Activated T-helper 2 cell treated with anti-CD3 and anti-CD28 coated beads, Interferon-gamma antibody, Interleukin-2, Interleukin-4, amounts not matched to agents 10 μg/mL and 5 μg/mL and 100 μg/mL, durations not matched to agents 14 hours and 24 hours and 36 hours (primary cell): ENCODE measurements at regions of chr7 and their contacts with region 1.

Region 1: GRCh38 chr7:7566651-7567611 is at the start of gene MIOS:
- DNase-seq: peak; percentile 76
- H3K4me3 Mint-ChIP-seq: peak within 1 kb of the TSS; percentile 76
- H3K27ac Mint-ChIP-seq: peak within 1 kb of the TSS; percentile 61
- H3K4me1 Mint-ChIP-seq: peaks cover 27% of the 10 kb centered on the region
- H3K27me3 Mint-ChIP-seq: peaks cover 9% of the 10 kb centered on the region
- total RNA-seq, gene MIOS: 29.8 and 30.3 TPM in 2 replicates

Region 2: DNA sequence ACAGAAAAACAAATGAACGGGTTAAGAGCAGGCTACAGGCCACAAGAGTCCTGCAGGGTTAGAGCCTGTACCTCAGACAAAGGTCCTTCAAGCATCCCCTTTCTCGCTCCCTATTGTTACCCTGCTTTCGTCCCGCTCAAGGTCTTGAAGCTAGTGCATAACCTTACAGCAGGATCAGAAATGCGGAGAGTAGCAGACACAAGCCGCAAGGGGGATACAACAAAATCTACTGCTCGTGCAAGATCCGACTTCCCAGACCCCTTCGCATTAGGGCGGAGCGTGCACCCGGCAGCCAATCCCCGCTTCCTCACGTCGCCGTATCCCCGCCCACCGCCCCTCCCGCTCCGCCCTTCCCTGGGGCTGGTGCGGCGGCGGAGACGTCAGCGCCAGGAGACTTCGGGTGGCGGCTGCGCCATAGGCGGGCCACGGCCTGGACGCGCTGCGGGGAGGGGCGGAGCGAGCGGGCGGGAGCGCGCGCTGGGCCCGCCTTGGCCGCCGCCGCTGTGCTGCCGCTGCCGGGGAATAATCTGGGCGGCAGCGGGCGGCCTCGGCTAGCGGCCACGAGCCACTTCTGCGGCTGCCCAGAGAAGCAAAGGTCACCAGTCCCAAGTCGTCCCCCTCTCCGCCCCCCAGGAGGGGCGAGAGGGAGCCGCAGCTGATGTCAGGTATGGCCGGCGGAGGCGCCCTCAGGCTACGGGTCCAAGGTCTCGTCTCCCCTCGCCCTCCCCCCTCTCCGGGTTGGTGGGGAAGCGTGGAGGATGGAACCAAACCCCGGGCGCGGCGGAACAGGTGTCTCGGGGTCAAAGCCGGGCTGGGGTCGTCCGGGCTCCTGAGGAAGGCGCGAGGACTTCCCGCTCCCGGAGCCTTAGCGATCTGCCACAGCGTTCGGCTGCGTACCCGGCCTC is 384.5 kb before region 1 on chr7 and contains the start of gene C1GALT1:
- intact Hi-C with region 1: loop called (anchors 1 kb)
- DNase-seq: peak; percentile 95
- H3K4me3 Mint-ChIP-seq: peak within 1 kb of the TSS; percentile 95
- H3K27ac Mint-ChIP-seq: peak within 1 kb of the TSS; percentile 99
- H3K4me1 Mint-ChIP-seq: peaks cover 22% of the 10 kb centered on the region
- H3K27me3 Mint-ChIP-seq: no peaks in the 10 kb centered on the region
- total RNA-seq, gene C1GALT1: 37.1 and 37.6 TPM in 2 replicates

Region 3: DNA sequence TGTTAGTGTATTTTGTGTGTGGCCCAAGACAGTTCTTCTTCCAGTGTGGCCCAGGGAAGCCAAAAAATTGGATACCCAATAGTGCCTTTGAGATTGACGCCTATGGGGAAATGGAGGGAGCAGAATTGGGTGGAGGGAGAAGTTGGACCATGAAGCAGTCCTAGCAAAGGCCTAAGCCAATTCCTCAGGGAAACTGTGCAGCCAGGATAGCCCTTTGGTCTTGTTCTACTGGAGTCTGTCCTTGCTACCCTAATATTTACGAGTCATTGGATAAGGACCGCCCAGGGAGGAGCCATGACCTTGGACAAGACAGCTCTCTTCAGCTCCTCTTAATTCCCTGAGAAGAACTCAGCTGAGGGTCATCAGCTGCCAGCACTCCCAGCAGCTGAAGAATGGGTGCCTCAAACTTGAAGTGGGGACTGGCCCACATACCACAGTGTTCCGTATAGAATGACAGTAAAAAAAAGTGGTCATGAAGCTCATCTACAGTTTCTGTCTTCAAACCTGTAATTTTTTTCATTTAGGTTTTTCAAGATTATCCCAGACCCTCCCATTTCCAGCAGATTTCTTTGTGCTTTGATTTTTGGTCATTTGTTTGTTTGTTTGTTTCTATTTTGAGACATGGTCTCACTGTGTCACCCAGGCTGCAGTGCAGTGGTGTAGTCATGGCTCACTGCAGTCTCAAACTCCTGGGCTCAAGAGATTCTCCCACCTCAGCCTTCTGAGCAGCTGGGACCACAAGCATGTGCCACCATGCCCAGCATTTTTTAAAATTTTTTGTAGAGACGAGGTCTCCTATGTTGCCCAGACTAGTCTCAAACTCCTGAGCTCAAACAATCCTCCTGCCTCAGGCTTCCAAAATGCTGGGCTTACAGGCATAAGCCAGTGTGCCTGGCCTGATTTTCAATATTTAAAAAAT is 303.4 kb before region 1 on chr7:
- intact Hi-C with region 1: loop called (anchors 5 kb)
- DNase-seq: no peak
- H3K4me3 Mint-ChIP-seq: no peak overlapping the region
- H3K27ac Mint-ChIP-seq: no peak overlapping the region
- H3K4me1 Mint-ChIP-seq: peaks cover 21% of the 10 kb centered on the region
- H3K27me3 Mint-ChIP-seq: no peaks in the 10 kb centered on the region

Region 4: DNA sequence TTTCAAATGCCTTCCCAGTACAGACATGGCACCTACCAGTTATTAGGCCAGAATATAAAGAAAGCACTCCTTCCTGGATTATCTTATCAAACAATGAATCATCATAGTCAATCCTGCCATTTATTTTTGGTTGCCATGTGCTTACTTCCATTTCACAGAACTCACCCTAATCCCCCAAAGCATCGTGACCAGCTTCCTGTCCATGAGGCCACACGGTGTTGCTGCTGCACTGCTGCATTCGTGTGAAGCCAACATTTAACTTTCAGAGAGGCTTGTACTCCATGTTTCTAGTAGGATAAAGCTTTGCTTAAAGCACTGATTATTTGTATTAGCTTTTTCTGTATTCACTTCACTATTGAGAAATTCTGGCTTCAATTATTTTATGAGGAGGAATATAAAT is 45.7 kb before region 1 on chr7:
- intact Hi-C with region 1: no loop called
- DNase-seq: no peak
- H3K4me3 Mint-ChIP-seq: no peak overlapping the region
- H3K27ac Mint-ChIP-seq: no peak overlapping the region
- H3K4me1 Mint-ChIP-seq: no peaks in the 10 kb centered on the region
- H3K27me3 Mint-ChIP-seq: peaks cover 8% of the 10 kb centered on the region

Region 5: GRCh38 chr7:7672545-7673239 is 105.8 kb after region 1 on chr7:
- intact Hi-C with region 1: loop called (anchors 1 kb)
- DNase-seq: no peak
- H3K4me3 Mint-ChIP-seq: peak overlapping the region; percentile 11
- H3K27ac Mint-ChIP-seq: peak overlapping the region; percentile 88
- H3K4me1 Mint-ChIP-seq: peaks cover 31% of the 10 kb centered on the region
- H3K27me3 Mint-ChIP-seq: no peaks in the 10 kb centered on the region

Region 6: GRCh38 chr7:7761340-7761980 is 194.5 kb after region 1 on chr7:
- intact Hi-C with region 1: loop called (anchors 5 kb)
- DNase-seq: no peak
- H3K4me3 Mint-ChIP-seq: peak overlapping the region; percentile 86
- H3K27ac Mint-ChIP-seq: peak overlapping the region; percentile 83
- H3K4me1 Mint-ChIP-seq: peaks cover 38% of the 10 kb centered on the region
- H3K27me3 Mint-ChIP-seq: no peaks in the 10 kb centered on the region

Region 7: GRCh38 chr7:8176370-8177081 is 609.6 kb after region 1 on chr7:
- intact Hi-C with region 1: loop called (anchors 1 kb)
- DNase-seq: peak; percentile 62
- H3K4me3 Mint-ChIP-seq: peak overlapping the region; percentile 62
- H3K27ac Mint-ChIP-seq: peak overlapping the region; percentile 95
- H3K4me1 Mint-ChIP-seq: peaks cover 49% of the 10 kb centered on the region
- H3K27me3 Mint-ChIP-seq: no peaks in the 10 kb centered on the region

Region 8: GRCh38 chr7:8582728-8583127 is 1015.8 kb after region 1 on chr7:
- intact Hi-C with region 1: no loop called
- DNase-seq: no peak
- H3K4me3 Mint-ChIP-seq: no peak overlapping the region
- H3K27ac Mint-ChIP-seq: no peak overlapping the region
- H3K4me1 Mint-ChIP-seq: no peaks in the 10 kb centered on the region
- H3K27me3 Mint-ChIP-seq: no peaks in the 10 kb centered on the region